CD8-positive, alpha-beta T cell (primary cell): ENCODE measurements at regions of chr12 and their contacts with region 1.

Region 1: GRCh38 chr12:23204933-23205778 is 580.2 kb downstream of the ETNK1 start:
- DNase-seq: peak in 4 of 9 experiments; percentile 7 to 59 (median 30)
- ATAC-seq: peak; percentile 46
- H3K4me3 ChIP-seq: no peak overlapping the region
- H3K4me3 Mint-ChIP-seq: no peak overlapping the region
- H3K27ac ChIP-seq: no peak overlapping the region
- H3K27ac Mint-ChIP-seq: no peak overlapping the region
- H3K4me1 ChIP-seq: no peaks in the 10 kb centered on the region
- H3K4me1 Mint-ChIP-seq: no peaks in the 10 kb centered on the region
- H3K27me3 ChIP-seq: no peaks in the 10 kb centered on the region
- H3K27me3 Mint-ChIP-seq: peaks cover 7% of the 10 kb centered on the region
- CTCF ChIP-seq: peak; percentile 98

Region 2: DNA sequence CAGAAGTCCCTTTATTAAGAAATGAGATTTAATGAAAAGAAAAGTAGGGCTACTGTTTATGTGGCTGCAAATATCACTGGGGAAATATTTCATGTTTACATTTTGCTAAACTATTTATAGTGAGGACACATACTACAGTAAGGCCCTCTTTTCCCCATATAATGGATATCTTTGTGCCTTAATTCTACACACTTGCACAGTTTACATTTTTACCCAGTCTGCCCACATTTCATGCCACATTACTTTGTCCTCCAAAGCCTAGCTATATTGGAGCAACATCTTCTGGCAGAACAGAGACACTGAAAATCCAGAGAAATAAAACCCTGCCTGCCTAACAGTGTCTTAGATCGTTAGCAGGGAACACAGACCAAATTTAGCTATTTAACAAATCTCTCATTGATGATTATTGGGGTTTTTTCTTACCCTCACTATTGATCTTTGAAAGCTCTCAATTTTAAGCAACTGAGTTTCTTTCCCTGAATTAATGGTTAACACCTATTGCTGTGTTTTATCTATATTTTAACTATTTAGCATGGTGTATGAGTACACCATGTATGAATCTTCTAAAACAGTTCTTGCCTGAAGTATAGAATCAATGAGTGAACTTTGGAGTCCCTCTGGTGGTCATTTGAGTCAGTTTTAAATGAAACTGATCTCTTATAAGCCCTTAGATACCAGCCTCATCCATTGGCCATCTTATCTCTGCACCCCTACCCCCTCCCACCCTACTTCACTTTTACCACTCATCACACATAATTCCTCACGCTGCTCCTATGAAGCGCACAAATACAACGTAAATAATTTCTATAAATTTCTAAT is 1573.5 kb after region 1 on chr12:
- CTCF ChIA-PET with region 1: interaction called, 4 read pairs
- POLR2A ChIA-PET with region 1: no interaction called
- intact Hi-C with region 1: loop called in 1 of 2 experiments (anchors 5 kb)
- DNase-seq: peak in 2 of 9 experiments; percentile 19 to 32
- ATAC-seq: no peak
- H3K4me3 ChIP-seq: no peak overlapping the region
- H3K4me3 Mint-ChIP-seq: no peak overlapping the region
- H3K27ac ChIP-seq: no peak overlapping the region
- H3K27ac Mint-ChIP-seq: no peak overlapping the region
- H3K4me1 ChIP-seq: no peaks in the 10 kb centered on the region
- H3K4me1 Mint-ChIP-seq: no peaks in the 10 kb centered on the region
- H3K27me3 ChIP-seq: no peaks in the 10 kb centered on the region
- H3K27me3 Mint-ChIP-seq: peaks cover 8% of the 10 kb centered on the region
- CTCF ChIP-seq: no peak